ENCODE measurements at regions of chr2 and their contacts with region 1.

Region 1: DNA sequence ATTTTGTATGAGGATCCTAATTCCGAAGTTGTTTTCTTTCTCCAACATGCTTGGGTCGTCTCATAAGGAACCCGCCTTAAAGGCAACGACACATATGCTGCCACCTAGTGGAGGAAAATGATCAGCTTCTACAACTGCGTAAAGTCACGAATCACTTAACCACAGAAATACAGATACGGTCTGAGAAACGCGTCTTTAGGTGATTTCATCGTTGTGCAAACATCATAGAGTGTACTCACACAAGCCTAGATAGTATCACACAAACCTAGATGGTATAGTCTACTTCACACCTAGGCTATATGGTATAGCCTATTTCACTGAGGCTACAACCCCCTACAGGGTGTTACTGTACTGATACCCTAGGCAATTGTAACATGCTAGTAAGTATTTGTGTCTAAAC is 13.1 kb downstream of the GNLY start:
- DNase-seq: peak in 1 of 2 donors; percentile 84
- H3K4me3 ChIP-seq: no peak overlapping the region
- H3K27ac ChIP-seq: peak overlapping the region; percentile 46 to 52
- H3K4me1 ChIP-seq: peaks cover 0 to 15% of the 10 kb centered on the region in 2 donors
- H3K27me3 ChIP-seq: no peaks in the 10 kb centered on the region
- CTCF ChIP-seq: peak; percentile 79 to 85 (median 82)

Region 2: DNA sequence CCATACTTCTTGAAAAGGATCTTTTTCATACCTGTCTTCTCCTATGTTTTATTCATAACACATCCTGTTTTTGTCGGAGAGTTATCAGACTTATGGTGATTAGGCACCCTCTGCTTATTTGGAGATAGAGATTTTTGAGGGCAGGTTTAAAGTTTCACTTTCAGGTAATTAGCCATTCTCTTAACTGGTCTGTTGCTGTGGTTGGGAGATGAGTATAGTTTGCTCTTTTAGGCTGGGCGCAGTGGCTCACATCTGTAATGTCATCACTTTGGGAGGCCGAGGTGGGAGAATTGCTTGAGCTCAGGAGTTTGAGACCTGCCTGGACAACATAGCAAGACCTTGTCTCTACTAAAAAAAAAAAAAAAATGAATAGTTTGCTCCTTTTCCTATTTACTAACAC is 64.6 kb before region 1 on chr2:
- intact Hi-C with region 1: loop called (anchors 1 kb)
- DNase-seq: no peak
- H3K4me3 ChIP-seq: no peak overlapping the region
- H3K27ac ChIP-seq: no peak overlapping the region
- H3K4me1 ChIP-seq: no peaks in the 10 kb centered on the region
- H3K27me3 ChIP-seq: no peaks in the 10 kb centered on the region
- CTCF ChIP-seq: no peak

Region 3: DNA sequence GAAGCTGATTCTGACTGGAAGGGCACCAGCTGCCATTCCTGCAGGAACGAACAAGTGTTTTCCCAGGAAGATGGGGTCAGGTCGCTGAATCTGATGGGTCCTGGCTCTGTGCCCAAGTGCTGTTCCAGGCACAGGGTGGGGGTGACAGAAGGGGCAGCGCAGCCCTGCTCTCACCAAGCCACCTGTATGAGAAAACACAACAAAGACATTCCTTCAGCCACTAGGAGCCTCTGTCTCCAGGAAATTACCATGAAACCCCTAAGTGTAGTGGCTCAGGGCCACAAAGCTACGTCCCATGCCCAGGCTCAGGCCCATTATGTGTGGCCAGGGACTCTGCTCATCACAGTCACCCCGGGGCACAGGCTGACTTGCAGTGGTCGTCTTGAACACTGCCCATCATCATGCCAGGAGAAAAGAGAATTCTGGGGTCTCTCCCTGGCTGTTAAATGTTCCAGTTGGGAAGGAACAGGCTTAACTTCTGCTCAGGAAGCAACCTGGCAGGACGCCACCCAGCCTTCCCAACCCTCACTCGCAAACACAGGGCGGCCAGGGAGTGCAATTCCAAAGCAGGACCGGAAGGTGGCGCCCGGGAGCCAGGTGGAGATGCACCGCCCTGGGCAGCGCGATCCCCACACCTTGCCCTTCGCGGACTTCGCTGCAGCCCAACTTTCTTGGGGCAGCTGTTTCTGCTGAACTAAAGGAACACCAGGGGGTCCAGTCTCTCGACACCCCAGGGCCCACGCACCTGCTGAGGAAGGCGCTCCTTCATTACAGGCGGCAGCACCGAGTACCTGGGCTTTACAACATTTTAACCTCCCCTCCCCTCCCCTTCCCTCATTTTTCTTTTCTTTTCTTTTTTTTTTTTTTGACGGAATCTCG is 28.3 kb before region 1 on chr2:
- intact Hi-C with region 1: loop called (anchors 1 kb)
- DNase-seq: peak; percentile 49 to 92
- H3K4me3 ChIP-seq: no peak overlapping the region
- H3K27ac ChIP-seq: no peak overlapping the region
- H3K4me1 ChIP-seq: peaks cover 0 to 5% of the 10 kb centered on the region in 2 donors
- H3K27me3 ChIP-seq: no peaks in the 10 kb centered on the region
- CTCF ChIP-seq: peak; percentile 92 to 99 (median 98)

Region 4: GRCh38 chr2:85750587-85751575 is 43.6 kb after region 1 on chr2:
- intact Hi-C with region 1: no loop called
- DNase-seq: peak in 1 of 2 donors; percentile 89
- H3K4me3 ChIP-seq: peak overlapping the region in 1 of 2 donors; percentile 19
- H3K27ac ChIP-seq: peak overlapping the region; percentile 97 to 98
- H3K4me1 ChIP-seq: peaks cover 11 to 46% of the 10 kb centered on the region in 2 donors
- H3K27me3 ChIP-seq: no peaks in the 10 kb centered on the region
- CTCF ChIP-seq: peak; percentile 79 to 90 (median 84)